Activated B cell treated with CpG ODN at 0.5 μM for 24 hours (primary cell): ENCODE measurements at regions of chr6 and their contacts with region 1.

Region 1: GRCh38 chr6:35468181-35468979 is at the start of gene RPL10A:
- DNase-seq: peak; percentile 87
- ATAC-seq: peak; percentile 85
- H3K4me3 Mint-ChIP-seq: peak within 1 kb of the TSS; percentile 96
- H3K27ac Mint-ChIP-seq: peak within 1 kb of the TSS; percentile 98
- H3K4me1 Mint-ChIP-seq: peaks cover 45% of the 10 kb centered on the region
- H3K27me3 Mint-ChIP-seq: no peaks in the 10 kb centered on the region
- CTCF ChIP-seq: no peak
- total RNA-seq, gene RPL10A: 2,485 and 2,644 TPM in 2 replicates

Region 2: GRCh38 chr6:33599413-33599911 is 1868.9 kb before region 1 on chr6:
- CTCF ChIA-PET with region 1: no interaction called
- POLR2A ChIA-PET with region 1: no interaction called
- intact Hi-C with region 1: no loop called
- DNase-seq: no peak
- ATAC-seq: no peak
- H3K4me3 Mint-ChIP-seq: no peak overlapping the region
- H3K27ac Mint-ChIP-seq: no peak overlapping the region
- H3K4me1 Mint-ChIP-seq: peaks cover 30% of the 10 kb centered on the region
- H3K27me3 Mint-ChIP-seq: no peaks in the 10 kb centered on the region
- CTCF ChIP-seq: no peak

Region 3: DNA sequence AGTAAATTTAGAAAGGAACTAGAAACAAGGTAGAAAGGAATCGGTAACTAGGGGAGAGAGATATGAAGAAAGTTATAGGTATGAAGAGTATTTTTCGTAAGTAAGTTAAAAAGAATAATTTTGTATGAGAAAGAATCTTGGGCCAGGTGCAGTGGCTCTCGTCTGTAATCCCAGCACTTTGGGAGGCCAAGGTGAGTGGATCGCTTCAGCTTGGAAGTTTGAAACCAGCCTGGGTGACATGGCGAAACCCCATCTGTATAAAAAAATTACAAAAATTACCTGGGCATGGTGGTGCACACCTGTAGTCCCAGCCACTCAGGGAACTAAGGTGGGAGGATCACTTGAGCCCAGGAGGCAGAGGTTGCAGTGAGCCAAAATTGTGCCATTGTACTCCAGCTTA is 369.3 kb before region 1 on chr6:
- CTCF ChIA-PET with region 1: no interaction called
- POLR2A ChIA-PET with region 1: no interaction called
- intact Hi-C with region 1: no loop called
- DNase-seq: no peak
- ATAC-seq: no peak
- H3K4me3 Mint-ChIP-seq: no peak overlapping the region
- H3K27ac Mint-ChIP-seq: no peak overlapping the region
- H3K4me1 Mint-ChIP-seq: no peaks in the 10 kb centered on the region
- H3K27me3 Mint-ChIP-seq: no peaks in the 10 kb centered on the region
- CTCF ChIP-seq: no peak

Region 4: GRCh38 chr6:35342258-35343091 is 125.9 kb before region 1 on chr6 and contains the start of gene PPARD:
- CTCF ChIA-PET with region 1: interaction called, 19 read pairs
- POLR2A ChIA-PET with region 1: interaction called, 20 read pairs
- intact Hi-C with region 1: loop called (anchors 1 kb)
- DNase-seq: peak; percentile 99
- ATAC-seq: peak; percentile 98
- H3K4me3 Mint-ChIP-seq: peak within 1 kb of the TSS; percentile 87
- H3K27ac Mint-ChIP-seq: peak within 1 kb of the TSS; percentile 91
- H3K4me1 Mint-ChIP-seq: peaks cover 59% of the 10 kb centered on the region
- H3K27me3 Mint-ChIP-seq: no peaks in the 10 kb centered on the region
- CTCF ChIP-seq: peak; percentile 62
- total RNA-seq, gene PPARD: 20.2 and 21.4 TPM in 2 replicates

Region 5: DNA sequence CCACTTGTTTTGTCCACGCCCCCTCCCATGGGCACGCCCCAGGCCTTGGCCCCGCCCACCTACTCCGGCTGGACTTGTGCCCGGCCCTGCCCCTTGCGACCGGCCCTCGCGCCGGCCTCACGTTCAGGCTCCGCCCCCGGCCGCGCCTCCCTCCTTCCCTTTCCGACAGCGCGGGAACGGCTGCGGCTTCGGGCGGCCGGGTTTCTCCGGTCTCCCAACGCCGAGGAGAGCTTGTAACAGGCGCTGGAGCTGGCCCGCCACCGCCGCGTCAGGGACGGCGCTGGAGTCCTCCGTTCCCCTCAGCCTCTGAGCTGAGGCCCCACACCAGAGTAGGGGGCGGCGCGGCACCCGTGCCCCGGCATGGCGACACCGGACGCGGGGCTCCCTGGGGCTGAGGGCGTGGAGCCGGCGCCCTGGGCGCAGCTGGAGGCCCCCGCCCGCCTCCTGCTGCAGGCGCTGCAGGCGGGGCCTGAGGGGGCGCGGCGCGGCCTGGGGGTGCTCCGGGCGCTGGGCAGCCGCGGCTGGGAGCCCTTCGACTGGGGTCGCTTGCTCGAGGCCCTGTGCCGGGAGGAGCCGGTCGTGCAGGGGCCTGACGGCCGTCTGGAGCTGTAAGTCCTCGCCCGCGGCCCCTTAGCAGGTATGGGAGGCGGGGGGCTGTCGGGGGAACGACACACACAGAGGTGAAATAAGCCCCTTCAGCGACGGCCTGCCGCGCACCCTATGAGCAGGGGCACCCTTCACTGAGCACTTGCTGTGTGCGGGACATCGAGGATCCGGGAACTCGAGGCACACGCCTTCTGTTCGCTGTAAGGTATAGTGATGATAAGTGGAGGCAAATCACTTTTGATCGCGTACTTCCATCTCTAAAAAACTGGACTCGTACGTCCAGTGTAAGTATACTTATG is 15.9 kb before region 1 on chr6 and contains the start of gene FANCE:
- CTCF ChIA-PET with region 1: interaction called, 15 read pairs
- POLR2A ChIA-PET with region 1: interaction called, 20 read pairs
- intact Hi-C with region 1: loop called (anchors 1 kb)
- DNase-seq: peak; percentile 97
- ATAC-seq: peak; percentile 90
- H3K4me3 Mint-ChIP-seq: peak within 1 kb of the TSS; percentile 86
- H3K27ac Mint-ChIP-seq: peak within 1 kb of the TSS; percentile 5
- H3K4me1 Mint-ChIP-seq: peaks cover 27% of the 10 kb centered on the region
- H3K27me3 Mint-ChIP-seq: no peaks in the 10 kb centered on the region
- CTCF ChIP-seq: no peak
- total RNA-seq, gene FANCE: 8.5 and 9.2 TPM in 2 replicates

Region 6: GRCh38 chr6:35480169-35480568 is 11.8 kb after region 1 on chr6:
- CTCF ChIA-PET with region 1: interaction called, 5 read pairs
- POLR2A ChIA-PET with region 1: interaction called, 15 read pairs
- intact Hi-C with region 1: no loop called
- DNase-seq: no peak
- ATAC-seq: no peak
- H3K4me3 Mint-ChIP-seq: no peak overlapping the region
- H3K27ac Mint-ChIP-seq: no peak overlapping the region
- H3K4me1 Mint-ChIP-seq: no peaks in the 10 kb centered on the region
- H3K27me3 Mint-ChIP-seq: no peaks in the 10 kb centered on the region
- CTCF ChIP-seq: no peak

Region 7: DNA sequence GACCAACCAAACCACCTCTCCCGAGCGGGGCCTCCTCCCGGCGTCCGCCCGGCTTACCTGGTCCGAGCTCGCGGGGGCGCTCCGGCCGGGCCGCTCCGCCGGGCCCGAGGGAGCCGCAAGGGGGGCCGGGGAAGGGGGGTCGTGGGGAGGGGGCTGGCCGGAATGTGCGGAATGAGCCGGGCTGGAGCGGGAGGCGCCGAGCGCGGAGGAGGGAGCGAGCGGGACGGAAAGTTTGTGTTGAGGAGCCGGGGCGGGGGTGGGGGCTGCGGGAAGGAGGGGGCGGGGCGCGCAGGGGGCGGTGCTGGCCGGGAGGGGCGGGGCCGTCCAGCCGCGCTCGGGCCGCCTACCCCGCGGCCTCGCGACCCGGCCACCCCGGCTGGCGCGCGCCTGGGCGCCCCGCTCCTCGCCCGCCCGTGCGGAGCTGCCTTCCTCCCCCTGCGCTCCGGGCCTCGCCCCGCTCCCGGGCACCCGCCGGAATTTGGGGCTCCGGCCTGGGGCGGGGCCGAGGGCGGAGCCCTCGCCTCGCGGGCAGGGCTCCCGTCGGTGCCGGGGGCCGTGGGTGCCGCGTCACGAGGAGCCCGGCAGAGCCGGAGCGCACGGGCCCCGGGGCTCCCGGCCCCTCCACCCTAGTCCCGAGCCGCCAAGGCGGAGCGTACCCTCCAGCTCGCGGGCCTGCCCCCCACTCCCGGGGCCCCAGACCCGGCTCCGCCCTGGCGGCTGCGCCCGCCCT is 28.6 kb after region 1 on chr6 and contains the start of gene TEAD3:
- CTCF ChIA-PET with region 1: no interaction called
- POLR2A ChIA-PET with region 1: interaction called, 16 read pairs
- intact Hi-C with region 1: loop called (anchors 1 kb)
- DNase-seq: peak; percentile 73
- ATAC-seq: peak; percentile 71
- H3K4me3 Mint-ChIP-seq: peak within 1 kb of the TSS; percentile 76
- H3K27ac Mint-ChIP-seq: no peak within 1 kb of the TSS
- H3K4me1 Mint-ChIP-seq: peaks cover 14% of the 10 kb centered on the region
- H3K27me3 Mint-ChIP-seq: peaks cover 35% of the 10 kb centered on the region
- CTCF ChIP-seq: no peak
- total RNA-seq, gene TEAD3: 0.13 and 0.34 TPM in 2 replicates

Region 8: GRCh38 chr6:36268478-36269275 is 800.3 kb after region 1 on chr6:
- CTCF ChIA-PET with region 1: no interaction called
- POLR2A ChIA-PET with region 1: no interaction called
- intact Hi-C with region 1: no loop called
- DNase-seq: no peak
- ATAC-seq: no peak
- H3K4me3 Mint-ChIP-seq: no peak overlapping the region
- H3K27ac Mint-ChIP-seq: no peak overlapping the region
- H3K4me1 Mint-ChIP-seq: no peaks in the 10 kb centered on the region
- H3K27me3 Mint-ChIP-seq: peaks cover 11% of the 10 kb centered on the region
- CTCF ChIP-seq: no peak